ENCODE measurements at regions of chr11 and their contacts with region 1.

Region 1: GRCh38 chr11:129578006-129578405 is 202.4 kb downstream of the BARX2 start:
- DNase-seq: no peak
- H3K4me3 ChIP-seq: no peak overlapping the region
- H3K27ac ChIP-seq: no peak overlapping the region
- H3K4me1 ChIP-seq: no peaks in the 10 kb centered on the region
- H3K27me3 ChIP-seq: no peaks in the 10 kb centered on the region
- CTCF ChIP-seq: no peak
- POLR2A ChIP-seq: no peak

Region 2: GRCh38 chr11:129546266-129546665 is 31.7 kb before region 1 on chr11:
- intact Hi-C with region 1: no loop called
- DNase-seq: no peak
- H3K4me3 ChIP-seq: no peak overlapping the region
- H3K27ac ChIP-seq: no peak overlapping the region
- H3K4me1 ChIP-seq: no peaks in the 10 kb centered on the region
- H3K27me3 ChIP-seq: no peaks in the 10 kb centered on the region
- CTCF ChIP-seq: no peak
- POLR2A ChIP-seq: no peak

Region 3: DNA sequence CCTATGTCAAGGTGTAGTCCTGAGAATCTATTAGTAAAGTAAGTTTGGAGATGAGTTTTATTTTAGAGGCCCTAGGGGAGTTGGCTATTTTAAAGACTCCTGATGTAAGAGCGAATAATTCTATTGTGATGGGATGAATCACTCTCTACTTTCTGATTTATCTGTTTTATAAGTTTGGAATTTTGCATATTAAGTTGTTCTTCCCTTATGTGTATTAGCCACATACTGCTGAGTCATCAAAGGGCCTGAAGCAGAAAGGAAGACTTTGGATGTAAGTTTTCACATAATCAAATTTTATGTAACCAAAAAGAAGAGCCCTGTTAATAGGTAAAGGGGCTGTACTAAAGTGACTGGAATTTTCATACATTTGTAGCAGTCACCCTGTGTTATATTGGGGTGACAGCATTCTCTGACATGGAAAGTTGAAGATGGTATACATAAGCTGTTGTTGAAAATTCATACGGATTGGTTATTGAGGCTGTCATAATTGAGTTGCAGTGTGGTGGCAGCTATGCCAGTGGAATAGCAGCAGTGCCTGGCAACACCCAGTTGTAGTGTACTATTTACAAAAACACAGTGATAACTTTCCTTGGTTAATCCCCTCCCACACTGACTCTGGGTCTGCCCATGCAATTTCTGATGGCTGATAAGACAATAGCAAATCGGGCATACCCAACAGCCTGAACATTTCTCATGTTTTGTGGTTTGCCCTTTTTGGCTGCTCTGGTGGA is 1701.8 kb after region 1 on chr11:
- intact Hi-C with region 1: loop called (anchors 10 kb)
- DNase-seq: no peak
- H3K4me3 ChIP-seq: no peak overlapping the region
- H3K27ac ChIP-seq: no peak overlapping the region
- H3K4me1 ChIP-seq: no peaks in the 10 kb centered on the region
- H3K27me3 ChIP-seq: peaks cover 0 to 4% of the 10 kb centered on the region in 2 donors
- CTCF ChIP-seq: no peak
- POLR2A ChIP-seq: no peak